Natural killer cell (primary cell): ENCODE measurements at regions of chr20 and their contacts with region 1.

Region 1: GRCh38 chr20:5119435-5120188 is at the start of gene PCNA:
- DNase-seq: peak; percentile 93 to 98
- ATAC-seq: peak; percentile 91 to 99 (median 93)
- H3K4me3 ChIP-seq: peak within 1 kb of the TSS; percentile 98
- H3K4me3 Mint-ChIP-seq: peak within 1 kb of the TSS; percentile 92
- H3K27ac ChIP-seq: peak within 1 kb of the TSS; percentile 91
- H3K27ac Mint-ChIP-seq: peak within 1 kb of the TSS; percentile 89 to 92
- H3K4me1 ChIP-seq: peaks cover 15% of the 10 kb centered on the region
- H3K4me1 Mint-ChIP-seq: peaks cover 10 to 25% of the 10 kb centered on the region in 2 donors
- H3K27me3 ChIP-seq: no peaks in the 10 kb centered on the region
- H3K27me3 Mint-ChIP-seq: no peaks in the 10 kb centered on the region
- CTCF ChIP-seq: no peak
- total RNA-seq, gene PCNA: 41.5 to 50.6 (median 46.9) TPM

Region 2: DNA sequence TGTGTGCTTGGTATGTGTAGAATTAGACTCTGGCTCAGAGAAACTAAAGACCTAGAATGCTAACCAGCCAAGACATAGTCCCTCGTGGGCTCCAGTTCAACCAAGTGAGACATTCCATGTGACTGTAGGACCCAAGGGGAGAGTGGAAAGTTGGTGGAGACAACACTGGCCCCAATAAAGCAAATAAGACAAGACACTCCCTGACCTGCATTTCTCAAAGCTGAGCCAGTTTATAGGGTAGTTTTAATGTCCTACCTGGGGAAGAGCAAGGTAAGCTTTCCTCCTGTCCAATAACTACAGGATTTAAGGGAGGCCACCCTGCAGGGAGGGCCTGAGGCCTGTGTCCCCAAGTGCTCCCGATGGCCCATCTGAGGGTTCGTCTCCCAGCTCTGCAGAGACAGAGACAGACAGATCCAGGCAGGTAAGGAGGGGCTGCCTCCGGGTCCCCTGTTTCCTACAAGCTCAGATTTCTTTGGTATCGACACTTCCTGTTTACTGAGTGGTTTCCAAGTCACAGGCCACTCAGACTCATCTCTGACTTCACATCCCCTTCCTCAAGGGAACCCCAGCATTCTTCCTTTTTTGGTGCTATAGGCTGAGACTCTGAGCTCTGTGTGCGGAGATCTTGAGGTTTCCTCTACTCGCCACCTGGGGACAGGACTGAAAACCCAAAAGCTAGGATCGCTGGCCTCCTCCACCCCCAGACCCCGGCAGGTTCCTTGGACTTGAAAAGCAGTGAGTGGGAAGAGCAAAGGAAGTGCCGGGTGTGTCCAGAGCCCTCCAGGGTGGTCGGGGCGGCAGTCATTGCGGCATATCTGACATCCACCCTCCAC is 305.5 kb before region 1 on chr20:
- intact Hi-C with region 1: loop called (anchors 5 kb)
- DNase-seq: peak; percentile 70 to 94
- ATAC-seq: peak; percentile 62 to 79 (median 70)
- H3K4me3 ChIP-seq: peak overlapping the region; percentile 40
- H3K4me3 Mint-ChIP-seq: peak overlapping the region; percentile 95
- H3K27ac ChIP-seq: peak overlapping the region; percentile 99
- H3K27ac Mint-ChIP-seq: peak overlapping the region; percentile 99 to 100
- H3K4me1 ChIP-seq: peaks cover 73% of the 10 kb centered on the region
- H3K4me1 Mint-ChIP-seq: peaks cover 48 to 57% of the 10 kb centered on the region in 2 donors
- H3K27me3 ChIP-seq: no peaks in the 10 kb centered on the region
- H3K27me3 Mint-ChIP-seq: no peaks in the 10 kb centered on the region
- CTCF ChIP-seq: no peak